Endothelial cell of umbilical vein (primary cell): ENCODE measurements at regions of chr1 and their contacts with region 1.

Region 1: DNA sequence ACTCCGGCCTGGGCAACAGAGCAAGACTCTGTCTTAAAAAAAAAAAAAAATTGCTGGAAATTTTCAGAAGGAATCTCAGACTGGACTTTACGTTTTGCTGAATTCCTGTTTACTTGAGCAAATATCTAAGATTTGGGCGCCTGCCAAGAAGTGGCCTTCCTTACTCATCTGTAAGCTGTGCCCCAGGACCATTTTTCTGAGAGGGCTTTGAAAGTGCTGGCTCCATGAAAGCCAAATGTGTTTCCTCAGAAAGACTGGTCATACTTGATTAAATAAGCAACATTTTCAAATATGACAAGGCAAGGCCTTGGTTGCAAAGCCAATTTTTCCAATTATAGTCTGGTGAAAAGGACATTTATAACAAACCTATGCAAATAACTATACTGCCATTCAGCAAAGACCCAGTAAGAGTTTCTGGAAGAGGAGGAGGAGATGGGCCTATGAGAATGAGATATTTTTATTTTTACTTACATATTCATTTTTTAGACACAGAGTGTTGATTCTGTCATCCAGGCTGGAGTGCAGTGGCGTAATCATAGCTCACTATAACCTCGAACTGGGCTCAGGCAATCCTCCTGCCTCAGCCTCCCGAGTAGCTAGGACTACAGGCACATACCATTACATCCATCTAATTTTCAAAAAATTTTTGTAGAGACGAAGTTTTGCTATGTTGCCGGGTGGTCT is 56.3 kb upstream of the HTR1D start:
- DNase-seq: peak; percentile 88
- H3K4me3 ChIP-seq: no peak overlapping the region
- H3K27ac ChIP-seq: no peak overlapping the region
- H3K4me1 ChIP-seq: peaks cover 6% of the 10 kb centered on the region
- H3K27me3 ChIP-seq: no peaks in the 10 kb centered on the region
- CTCF ChIP-seq: no peak
- POLR2A ChIP-seq: no peak

Region 2: GRCh38 chr1:22976461-22977243 is 296.9 kb before region 1 on chr1:
- CTCF ChIA-PET with region 1: no interaction called
- POLR2A ChIA-PET with region 1: no interaction called
- dilution Hi-C with region 1: no loop called
- intact Hi-C with region 1: loop called (anchors 5 kb)
- DNase-seq: peak; percentile 83
- H3K4me3 ChIP-seq: no peak overlapping the region
- H3K27ac ChIP-seq: no peak overlapping the region
- H3K4me1 ChIP-seq: peaks cover 12% of the 10 kb centered on the region
- H3K27me3 ChIP-seq: no peaks in the 10 kb centered on the region
- CTCF ChIP-seq: peak; percentile 81 to 87
- POLR2A ChIP-seq: no peak

Region 3: DNA sequence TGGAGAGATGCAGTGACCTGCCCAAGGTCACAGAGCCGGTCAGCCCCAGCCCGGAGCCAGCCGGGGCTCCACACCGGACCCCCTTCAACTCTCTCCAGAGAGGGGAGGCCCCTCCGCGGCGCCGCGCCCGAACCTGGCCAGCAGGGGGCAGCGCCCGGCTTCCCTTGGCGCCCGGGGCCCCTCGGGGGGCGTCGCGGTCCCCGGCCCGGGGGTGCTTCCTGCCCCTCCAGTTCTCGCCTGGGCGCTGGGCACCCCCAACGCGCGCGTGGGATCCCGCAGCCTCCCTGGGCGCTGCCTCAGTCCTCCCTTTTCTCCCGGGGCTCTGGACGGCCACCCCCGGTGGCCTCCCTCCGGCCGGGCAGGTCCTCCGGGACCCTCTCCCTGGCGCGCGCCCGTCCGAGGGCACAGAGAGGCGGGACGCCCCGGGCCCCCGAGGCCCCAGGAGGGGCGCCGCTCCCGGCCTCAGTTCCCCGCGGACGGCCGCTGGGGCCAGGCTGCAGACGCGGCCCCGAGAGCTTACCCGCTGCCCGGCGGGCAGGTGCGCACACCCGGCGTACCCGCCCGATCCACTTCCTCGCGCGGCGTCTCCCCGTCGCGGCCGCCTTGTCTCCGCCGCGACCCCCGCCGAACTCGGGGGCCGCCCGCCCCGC is 56.7 kb before region 1 on chr1:
- CTCF ChIA-PET with region 1: interaction called, 12 read pairs
- POLR2A ChIA-PET with region 1: no interaction called
- dilution Hi-C with region 1: no loop called
- intact Hi-C with region 1: no loop called
- DNase-seq: no peak
- H3K4me3 ChIP-seq: peak overlapping the region; percentile 49 to 60 (median 49)
- H3K27ac ChIP-seq: no peak overlapping the region
- H3K4me1 ChIP-seq: peaks cover 10% of the 10 kb centered on the region
- H3K27me3 ChIP-seq: peaks cover 0 to 7% of the 10 kb centered on the region in 2 experiments
- CTCF ChIP-seq: peak; percentile 68 to 73
- POLR2A ChIP-seq: no peak

Region 4: GRCh38 chr1:23224714-23225648 is 48.6 kb before region 1 on chr1:
- CTCF ChIA-PET with region 1: no interaction called
- POLR2A ChIA-PET with region 1: no interaction called
- dilution Hi-C with region 1: no loop called
- intact Hi-C with region 1: loop called (anchors 1 kb)
- DNase-seq: peak; percentile 78
- H3K4me3 ChIP-seq: no peak overlapping the region
- H3K27ac ChIP-seq: peak overlapping the region; percentile 46
- H3K4me1 ChIP-seq: peaks cover 17% of the 10 kb centered on the region
- H3K27me3 ChIP-seq: no peaks in the 10 kb centered on the region
- CTCF ChIP-seq: no peak
- POLR2A ChIP-seq: no peak

Region 5: DNA sequence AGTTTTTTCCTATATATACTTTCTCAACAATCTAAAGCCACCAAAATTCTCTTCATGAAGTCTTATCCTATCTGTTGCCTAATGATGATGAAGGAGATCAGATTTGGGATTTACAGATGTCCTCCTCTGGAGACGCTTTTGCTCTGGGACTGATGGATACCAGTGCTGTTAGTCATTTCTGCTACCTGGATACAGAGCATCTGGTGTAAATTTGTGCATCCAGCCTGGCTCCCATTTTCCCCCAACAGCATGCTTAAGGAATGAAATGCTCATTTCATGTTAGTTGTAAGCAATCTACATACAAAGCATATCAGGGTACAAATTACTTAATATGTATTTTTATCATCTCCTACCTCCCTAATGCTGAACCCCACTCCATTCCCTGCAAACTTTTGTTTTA is 12.8 kb after region 1 on chr1:
- CTCF ChIA-PET with region 1: no interaction called
- POLR2A ChIA-PET with region 1: no interaction called
- dilution Hi-C with region 1: no loop called
- intact Hi-C with region 1: no loop called
- DNase-seq: no peak
- H3K4me3 ChIP-seq: no peak overlapping the region
- H3K27ac ChIP-seq: no peak overlapping the region
- H3K4me1 ChIP-seq: peaks cover 59% of the 10 kb centered on the region
- H3K27me3 ChIP-seq: no peaks in the 10 kb centered on the region
- CTCF ChIP-seq: no peak
- POLR2A ChIP-seq: no peak

Region 6: DNA sequence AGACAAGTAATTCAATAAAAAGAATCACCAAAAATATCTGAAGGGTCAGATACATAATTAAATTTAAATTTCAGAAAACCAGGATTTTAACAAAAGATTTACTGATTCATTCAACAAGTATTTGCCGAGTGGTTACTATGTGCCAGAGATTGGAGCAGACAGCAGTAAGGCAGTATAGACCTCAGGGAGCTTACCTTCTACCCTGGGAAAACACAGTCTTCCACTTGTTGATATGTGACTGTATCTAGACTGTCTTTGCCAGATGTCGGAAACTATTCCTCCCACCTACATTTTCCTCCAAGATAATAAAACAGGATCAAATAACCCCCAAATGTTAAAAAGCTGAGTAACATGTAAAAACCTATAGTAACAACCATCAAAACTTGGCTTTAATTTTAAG is 64.3 kb after region 1 on chr1:
- CTCF ChIA-PET with region 1: no interaction called
- POLR2A ChIA-PET with region 1: no interaction called
- dilution Hi-C with region 1: no loop called
- intact Hi-C with region 1: no loop called
- DNase-seq: no peak
- H3K4me3 ChIP-seq: no peak overlapping the region
- H3K27ac ChIP-seq: no peak overlapping the region
- H3K4me1 ChIP-seq: peaks cover 22% of the 10 kb centered on the region
- H3K27me3 ChIP-seq: no peaks in the 10 kb centered on the region
- CTCF ChIP-seq: no peak
- POLR2A ChIP-seq: no peak